ENCODE measurements at regions of chr9 and their contacts with region 1.

Region 1: DNA sequence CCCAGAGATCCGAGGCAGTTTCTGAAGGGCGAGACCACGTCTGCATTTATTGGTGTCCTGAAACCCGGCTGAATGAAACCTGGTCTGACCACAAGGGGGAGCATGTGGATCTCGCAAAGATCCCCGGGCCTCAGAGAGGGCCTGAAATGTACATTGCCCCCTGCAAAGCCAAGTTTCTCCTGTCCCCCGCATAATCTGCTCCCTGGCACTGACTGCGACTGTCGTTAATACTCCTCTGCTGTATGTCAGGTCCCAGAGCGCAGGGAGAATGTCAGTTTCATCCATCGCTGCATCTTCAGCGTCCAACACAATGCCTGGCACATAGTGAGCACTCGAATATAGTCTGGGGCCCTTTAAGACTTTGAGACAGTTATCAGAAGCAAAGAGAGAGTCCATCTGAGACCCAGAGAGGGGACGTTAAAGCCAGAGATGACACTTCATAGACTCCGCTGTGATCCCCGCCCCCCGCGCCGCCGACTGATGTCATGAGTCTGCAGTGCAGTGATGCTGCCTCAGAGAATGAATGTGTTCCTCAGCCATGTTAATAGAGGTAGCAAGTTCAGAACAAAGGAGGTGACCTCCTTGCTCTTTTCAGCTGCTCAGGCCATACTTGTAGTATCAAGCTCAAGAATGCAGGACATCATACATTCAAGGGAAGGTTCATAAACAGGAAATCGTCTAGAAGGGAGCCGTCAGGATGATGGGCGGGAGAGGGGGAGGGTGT is 74.5 kb upstream of the BARHL1 start:
- DNase-seq: peak; percentile 87
- H3K4me3 ChIP-seq: no peak overlapping the region
- H3K27ac ChIP-seq: no peak overlapping the region
- H3K4me1 ChIP-seq: no peaks in the 10 kb centered on the region
- H3K27me3 ChIP-seq: no peaks in the 10 kb centered on the region
- CTCF ChIP-seq: peak; percentile 72 to 79 (median 77)
- POLR2A ChIP-seq: no peak

Region 2: GRCh38 chr9:132182314-132183091 is 325.4 kb before region 1 on chr9:
- intact Hi-C with region 1: no loop called
- DNase-seq: peak; percentile 66
- H3K4me3 ChIP-seq: no peak overlapping the region
- H3K27ac ChIP-seq: peak overlapping the region; percentile 3 to 65
- H3K4me1 ChIP-seq: peaks cover 51% of the 10 kb centered on the region
- H3K27me3 ChIP-seq: no peaks in the 10 kb centered on the region
- CTCF ChIP-seq: no peak
- POLR2A ChIP-seq: no peak

Region 3: DNA sequence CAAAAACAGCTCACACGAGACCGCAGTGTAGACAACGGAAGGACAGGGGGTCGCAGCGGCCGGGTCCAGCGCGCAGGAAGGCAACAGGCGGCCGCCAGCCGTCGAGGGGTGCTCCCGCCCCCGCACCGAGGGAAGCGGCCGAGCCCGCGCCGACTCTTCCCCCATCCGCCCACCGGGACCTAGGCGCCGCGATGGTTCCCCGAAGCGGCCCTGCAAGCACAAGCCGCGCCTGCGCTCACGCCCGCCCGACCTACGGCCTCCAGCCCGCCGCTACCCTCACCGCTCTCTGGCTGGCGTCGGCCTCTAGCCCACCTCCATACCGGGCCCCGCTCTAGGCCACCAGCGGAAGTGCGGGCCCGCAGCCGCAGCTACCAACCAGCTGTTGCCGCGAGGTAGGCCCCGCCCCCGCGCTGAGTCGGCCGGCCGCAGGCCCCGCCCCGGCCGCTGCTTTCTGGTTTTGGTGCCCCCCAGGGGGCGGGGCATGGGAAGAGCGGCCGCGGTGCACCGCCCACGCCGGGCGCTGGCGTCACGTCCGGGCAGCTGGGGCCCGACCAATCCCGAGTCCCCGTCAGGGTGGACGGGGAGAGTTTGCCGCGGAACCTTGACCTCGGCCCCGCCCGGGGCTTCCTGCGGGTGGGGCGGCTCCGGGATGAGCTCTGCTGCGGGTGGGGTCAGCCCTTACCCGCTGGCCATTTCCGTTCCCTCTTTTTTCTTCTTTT is 153.1 kb before region 1 on chr9 and contains the start of gene SETX:
- intact Hi-C with region 1: no loop called
- DNase-seq: peak; percentile 98
- H3K4me3 ChIP-seq: peak within 1 kb of the TSS; percentile 88 to 98
- H3K27ac ChIP-seq: peak within 1 kb of the TSS; percentile 91 to 93
- H3K4me1 ChIP-seq: peaks cover 27% of the 10 kb centered on the region
- H3K27me3 ChIP-seq: no peaks in the 10 kb centered on the region
- CTCF ChIP-seq: peak in 1 of 3 experiments; percentile 1
- POLR2A ChIP-seq: peak; percentile 81
- total RNA-seq, gene SETX: 109 to 157 TPM

Region 4: GRCh38 chr9:132572921-132573320 is 65.0 kb after region 1 on chr9:
- intact Hi-C with region 1: loop called (anchors 5 kb)
- DNase-seq: no peak
- H3K4me3 ChIP-seq: no peak overlapping the region
- H3K27ac ChIP-seq: no peak overlapping the region
- H3K4me1 ChIP-seq: no peaks in the 10 kb centered on the region
- H3K27me3 ChIP-seq: no peaks in the 10 kb centered on the region
- CTCF ChIP-seq: no peak
- POLR2A ChIP-seq: no peak